ENCODE measurements at regions of chr20 and their contacts with region 1.

Region 1: GRCh38 chr20:19784511-19785172 is 26.6 kb downstream of the RIN2 start:
- DNase-seq: peak; percentile 72 to 86 (median 83)
- H3K4me3 ChIP-seq: peak overlapping the region in 1 of 7 experiments; percentile 8
- H3K27ac ChIP-seq: no peak overlapping the region
- H3K4me1 ChIP-seq: peaks cover 0 to 8% (median 4%) of the 10 kb centered on the region in 4 experiments
- H3K27me3 ChIP-seq: no peaks in the 10 kb centered on the region

Region 2: DNA sequence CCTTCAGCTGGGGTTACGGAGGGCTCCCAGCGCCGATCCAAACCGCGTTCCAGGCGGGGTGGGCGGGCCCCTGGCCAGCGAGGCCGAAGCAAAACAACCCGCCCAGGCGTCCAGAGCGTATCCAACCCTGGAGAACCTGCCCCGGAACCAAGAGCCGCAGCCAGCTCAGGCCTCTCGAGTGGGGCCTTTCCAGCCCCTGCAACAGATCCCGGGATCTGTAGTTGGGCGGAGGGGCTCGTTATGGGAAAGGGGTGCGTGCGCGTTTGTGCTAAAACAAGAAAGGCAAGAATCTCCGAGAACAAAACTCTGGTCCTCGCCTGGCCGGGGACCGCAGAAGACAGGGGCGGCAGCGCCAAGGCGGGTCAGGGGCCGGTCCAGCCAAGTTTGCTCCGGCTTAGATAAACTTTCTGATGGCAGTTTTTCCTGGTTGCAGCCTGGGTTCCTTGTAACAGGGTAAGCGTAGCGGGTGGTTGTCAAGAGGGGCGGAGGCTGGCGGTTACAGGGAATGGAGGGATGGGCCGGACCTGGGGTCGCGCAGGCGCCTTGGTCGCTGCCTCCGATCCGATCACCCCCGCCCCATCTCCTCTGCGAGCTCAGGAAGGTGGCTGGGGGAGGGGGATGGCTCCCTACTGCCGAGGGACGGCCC is 27.0 kb before region 1 on chr20:
- CTCF ChIA-PET with region 1: interaction called, 19 read pairs
- POLR2A ChIA-PET with region 1: no interaction called
- DNase-seq: peak; percentile 88 to 97 (median 95)
- H3K4me3 ChIP-seq: peak overlapping the region; percentile 69 to 93 (median 76)
- H3K27ac ChIP-seq: peak overlapping the region; percentile 50 to 71
- H3K4me1 ChIP-seq: peaks cover 6 to 32% (median 24%) of the 10 kb centered on the region in 4 experiments
- H3K27me3 ChIP-seq: no peaks in the 10 kb centered on the region

Measured in common myeloid progenitor, CD34-positive (primary cell).